ENCODE measurements at regions of chr10 and their contacts with region 1.

Region 1: DNA sequence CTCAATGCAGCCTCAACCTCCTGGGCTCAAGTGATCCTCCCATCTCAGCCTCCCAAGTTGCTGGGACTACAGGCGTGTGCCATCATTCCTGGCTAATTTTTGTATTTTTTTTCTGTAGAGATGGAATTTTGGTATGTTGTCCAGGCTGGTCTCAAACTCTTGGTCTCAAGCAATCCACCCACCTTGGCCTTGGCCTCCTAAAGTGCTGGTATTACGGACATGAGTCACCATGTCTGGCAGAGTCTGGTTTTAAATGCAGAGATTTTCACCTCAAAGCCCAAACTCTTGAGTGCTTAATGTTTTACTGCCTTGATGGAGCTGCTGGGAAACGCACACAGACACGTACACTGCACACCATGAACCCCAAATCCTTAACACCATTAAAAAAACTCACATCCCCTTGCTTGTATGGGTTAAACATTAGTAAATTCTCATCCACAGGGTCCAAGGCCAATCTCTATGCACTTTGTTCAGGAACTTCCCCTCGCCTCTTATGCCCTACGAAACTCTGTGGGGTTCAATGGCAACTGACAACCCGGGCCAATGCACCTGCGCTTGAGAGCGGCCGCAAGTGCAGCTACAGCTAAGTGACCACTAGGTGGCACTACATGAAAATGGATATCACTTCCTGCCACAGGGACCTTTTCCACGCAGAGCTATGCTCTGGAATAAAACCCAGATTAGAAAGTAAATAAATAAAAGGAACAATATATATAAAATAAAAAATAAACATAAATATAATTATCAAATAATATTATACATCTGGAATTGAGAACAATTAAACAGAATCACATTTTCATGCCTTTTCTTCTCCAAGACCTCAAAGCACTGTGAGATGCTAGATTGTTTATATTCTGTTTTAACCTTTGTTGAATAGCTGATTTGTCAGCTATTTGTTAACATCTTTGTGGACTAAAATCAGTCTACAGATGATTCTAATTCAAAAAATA is 66.9 kb upstream of the AFAP1L2 start:
- DNase-seq: peak; percentile 83
- ATAC-seq: peak; percentile 90
- H3K4me3 ChIP-seq: no peak overlapping the region
- H3K4me3 Mint-ChIP-seq: no peak overlapping the region
- H3K27ac ChIP-seq: no peak overlapping the region
- H3K27ac Mint-ChIP-seq: no peak overlapping the region
- H3K4me1 ChIP-seq: peaks cover 0 to 4% of the 10 kb centered on the region in 2 donors
- H3K4me1 Mint-ChIP-seq: peaks cover 25% of the 10 kb centered on the region
- H3K27me3 ChIP-seq: no peaks in the 10 kb centered on the region
- H3K27me3 Mint-ChIP-seq: no peaks in the 10 kb centered on the region
- CTCF ChIP-seq: peak; percentile 96

Region 2: DNA sequence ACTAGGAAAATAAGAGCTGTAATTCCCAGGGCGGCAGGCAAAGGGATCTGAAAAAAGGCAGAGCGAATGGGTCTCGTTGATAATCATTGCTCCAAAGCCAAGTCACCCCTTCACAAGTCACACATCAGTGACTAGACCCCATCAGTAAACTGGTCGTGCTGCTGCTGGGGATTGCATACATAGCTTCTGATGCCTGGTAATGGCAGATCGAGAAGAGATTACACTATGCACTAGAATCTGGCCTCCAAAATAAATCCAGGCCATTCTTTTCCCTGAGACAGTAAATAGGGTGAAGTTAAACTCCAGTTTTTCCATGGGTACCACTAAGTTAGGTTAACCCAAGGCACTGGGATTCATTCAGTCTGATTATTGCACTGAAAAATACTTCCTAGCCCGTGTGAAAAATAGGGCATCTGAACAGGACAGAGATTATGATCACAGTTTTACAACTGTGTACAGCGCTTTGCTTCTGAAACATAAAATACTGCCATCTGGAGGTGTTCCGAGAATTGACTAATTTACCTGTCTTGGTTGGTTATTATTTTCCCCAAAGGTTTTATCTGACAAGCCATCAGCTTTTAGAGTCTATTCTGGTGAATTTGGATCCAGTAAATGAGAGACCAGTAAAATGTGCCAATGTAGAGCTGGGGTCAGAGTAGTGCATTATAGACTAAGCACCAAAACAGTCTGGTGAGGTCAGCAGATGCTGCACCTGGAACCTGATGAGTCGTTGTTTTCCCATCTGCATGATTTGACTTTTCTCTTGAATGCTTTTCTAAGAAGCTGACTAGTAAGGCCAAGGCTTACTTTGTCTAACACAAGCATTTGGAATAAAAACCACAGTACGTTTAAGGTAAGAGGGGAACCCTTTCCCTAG is 15.9 kb after region 1 on chr10:
- CTCF ChIA-PET with region 1: interaction called, 49 read pairs
- POLR2A ChIA-PET with region 1: no interaction called
- intact Hi-C with region 1: no loop called
- DNase-seq: no peak
- ATAC-seq: no peak
- H3K4me3 ChIP-seq: no peak overlapping the region
- H3K4me3 Mint-ChIP-seq: no peak overlapping the region
- H3K27ac ChIP-seq: no peak overlapping the region
- H3K27ac Mint-ChIP-seq: no peak overlapping the region
- H3K4me1 ChIP-seq: peaks cover 7 to 8% of the 10 kb centered on the region in 2 donors
- H3K4me1 Mint-ChIP-seq: peaks cover 15% of the 10 kb centered on the region
- H3K27me3 ChIP-seq: no peaks in the 10 kb centered on the region
- H3K27me3 Mint-ChIP-seq: no peaks in the 10 kb centered on the region
- CTCF ChIP-seq: no peak

Region 3: GRCh38 chr10:114499630-114500190 is 28.5 kb after region 1 on chr10:
- CTCF ChIA-PET with region 1: interaction called, 17 read pairs
- POLR2A ChIA-PET with region 1: interaction called, 3 read pairs
- intact Hi-C with region 1: loop called (anchors 2 kb)
- DNase-seq: peak; percentile 75
- ATAC-seq: peak; percentile 26
- H3K4me3 ChIP-seq: peak overlapping the region in 3 of 5 experiments; percentile 4 to 51 (median 32)
- H3K4me3 Mint-ChIP-seq: peak overlapping the region; percentile 79
- H3K27ac ChIP-seq: peak overlapping the region; percentile 90 to 96
- H3K27ac Mint-ChIP-seq: peak overlapping the region; percentile 94
- H3K4me1 ChIP-seq: peaks cover 69 to 82% of the 10 kb centered on the region in 2 donors
- H3K4me1 Mint-ChIP-seq: peaks cover 84% of the 10 kb centered on the region
- H3K27me3 ChIP-seq: no peaks in the 10 kb centered on the region
- H3K27me3 Mint-ChIP-seq: no peaks in the 10 kb centered on the region
- CTCF ChIP-seq: no peak

Region 4: DNA sequence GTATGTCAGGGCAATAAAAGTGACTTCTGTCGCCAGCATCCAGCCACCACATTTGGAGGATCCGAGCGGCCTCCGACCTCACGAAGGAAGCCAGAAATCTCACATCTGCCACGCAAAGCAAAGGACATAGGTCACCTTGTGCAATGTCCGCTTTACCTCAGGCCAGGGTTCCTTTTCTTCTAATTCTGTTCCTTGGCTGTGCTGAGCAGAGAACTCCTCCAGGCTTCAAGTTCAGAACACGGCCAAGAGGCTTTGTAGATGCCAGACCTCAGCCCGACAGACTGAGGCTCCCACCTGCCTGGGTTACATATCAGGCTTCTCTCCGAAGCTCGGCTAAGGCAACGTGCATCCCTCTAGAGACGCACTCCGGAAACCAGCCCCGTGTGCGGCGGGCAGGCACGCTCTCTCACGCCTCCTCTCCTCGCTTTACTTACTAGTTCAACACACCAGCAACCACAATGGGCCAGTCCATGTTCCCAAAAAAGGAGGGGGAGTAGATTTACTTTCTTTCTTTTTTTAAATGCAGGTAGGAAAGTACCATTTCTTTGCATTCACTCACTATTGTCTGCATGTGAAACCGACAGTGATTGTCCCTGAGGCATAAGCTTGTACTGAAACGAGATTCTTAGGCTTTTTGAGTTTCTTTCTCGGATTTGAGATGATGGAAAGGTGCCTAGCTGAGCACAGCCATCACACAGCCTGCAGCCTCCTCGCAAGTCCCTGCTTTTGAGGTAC is 55.4 kb after region 1 on chr10:
- CTCF ChIA-PET with region 1: interaction called, 43 read pairs
- POLR2A ChIA-PET with region 1: interaction called, 3 read pairs
- intact Hi-C with region 1: loop called (anchors 1 kb)
- DNase-seq: peak; percentile 96
- ATAC-seq: peak; percentile 96
- H3K4me3 ChIP-seq: peak overlapping the region; percentile 64 to 84 (median 79)
- H3K4me3 Mint-ChIP-seq: peak overlapping the region; percentile 95
- H3K27ac ChIP-seq: peak overlapping the region; percentile 79 to 96
- H3K27ac Mint-ChIP-seq: peak overlapping the region; percentile 99
- H3K4me1 ChIP-seq: peaks cover 42 to 51% of the 10 kb centered on the region in 2 donors
- H3K4me1 Mint-ChIP-seq: peaks cover 59% of the 10 kb centered on the region
- H3K27me3 ChIP-seq: no peaks in the 10 kb centered on the region
- H3K27me3 Mint-ChIP-seq: no peaks in the 10 kb centered on the region
- CTCF ChIP-seq: no peak

Region 5: DNA sequence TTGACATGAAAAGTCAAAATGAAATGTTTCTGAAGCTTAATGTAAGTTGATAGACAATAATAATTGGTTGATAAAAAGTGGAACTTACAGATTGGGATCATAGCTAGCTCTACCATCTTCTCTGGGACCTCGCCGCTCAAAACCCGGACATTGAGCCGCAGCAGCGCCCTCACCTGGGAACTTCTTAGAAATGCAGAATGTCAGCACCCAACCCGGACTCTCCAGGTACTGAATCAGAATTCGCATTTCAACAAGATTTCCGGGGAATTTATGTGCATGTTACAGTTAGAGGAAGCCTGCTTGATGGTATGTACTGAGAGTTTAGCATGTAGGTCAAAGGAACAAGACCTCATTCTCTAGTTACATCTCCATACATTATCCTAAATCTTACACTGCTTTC is 223.5 kb after region 1 on chr10:
- CTCF ChIA-PET with region 1: interaction called, 34 read pairs
- POLR2A ChIA-PET with region 1: no interaction called
- intact Hi-C with region 1: loop called (anchors 1 kb)
- DNase-seq: peak; percentile 42
- ATAC-seq: no peak
- H3K4me3 ChIP-seq: no peak overlapping the region
- H3K4me3 Mint-ChIP-seq: no peak overlapping the region
- H3K27ac ChIP-seq: no peak overlapping the region
- H3K27ac Mint-ChIP-seq: no peak overlapping the region
- H3K4me1 ChIP-seq: no peaks in the 10 kb centered on the region
- H3K4me1 Mint-ChIP-seq: no peaks in the 10 kb centered on the region
- H3K27me3 ChIP-seq: peaks cover 0 to 5% (median 4%) of the 10 kb centered on the region in 4 experiments
- H3K27me3 Mint-ChIP-seq: peaks cover 10% of the 10 kb centered on the region
- CTCF ChIP-seq: peak; percentile 60

Region 6: DNA sequence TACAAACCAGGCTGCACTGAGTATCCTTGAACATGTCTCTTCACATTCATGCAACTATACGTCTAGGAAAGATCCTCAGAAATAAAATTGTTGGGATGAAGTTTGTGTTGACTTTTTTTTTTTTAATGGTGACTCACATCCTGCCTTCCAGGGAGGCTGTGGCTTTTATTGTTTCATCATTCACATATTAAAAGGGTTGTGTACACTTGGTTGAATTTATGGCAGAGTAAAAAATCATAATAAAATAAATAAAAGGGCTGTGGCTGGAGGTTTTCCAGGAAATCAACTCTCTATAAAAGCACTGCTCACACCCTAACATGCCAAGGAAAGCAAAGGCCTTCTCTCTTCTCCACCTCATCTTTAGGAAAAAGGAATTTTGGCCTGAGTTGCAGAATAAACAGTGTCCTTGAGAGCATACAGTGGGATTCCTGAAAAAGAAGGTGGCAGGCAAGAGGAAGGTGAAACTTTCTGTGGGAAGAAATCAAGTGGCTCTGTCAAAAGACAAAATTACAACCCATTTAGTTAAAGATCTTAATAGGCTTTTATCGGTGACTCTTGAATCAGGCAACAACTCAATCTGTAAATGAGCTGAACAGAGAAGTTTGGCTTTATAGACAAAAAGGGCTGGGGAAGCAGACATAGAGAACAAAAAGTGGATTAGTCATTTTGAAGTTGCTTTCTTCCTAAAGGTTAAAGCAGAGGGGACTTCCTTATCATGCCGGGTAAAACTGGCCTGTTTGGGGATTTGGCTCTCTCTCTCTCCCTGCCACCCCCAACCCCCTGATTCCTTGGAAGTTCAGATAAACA is 308.8 kb after region 1 on chr10:
- CTCF ChIA-PET with region 1: interaction called, 50 read pairs
- POLR2A ChIA-PET with region 1: no interaction called
- intact Hi-C with region 1: no loop called
- DNase-seq: no peak
- ATAC-seq: no peak
- H3K4me3 ChIP-seq: no peak overlapping the region
- H3K4me3 Mint-ChIP-seq: no peak overlapping the region
- H3K27ac ChIP-seq: no peak overlapping the region
- H3K27ac Mint-ChIP-seq: no peak overlapping the region
- H3K4me1 ChIP-seq: no peaks in the 10 kb centered on the region
- H3K4me1 Mint-ChIP-seq: no peaks in the 10 kb centered on the region
- H3K27me3 ChIP-seq: peaks cover 0 to 4% (median 0%) of the 10 kb centered on the region in 4 experiments
- H3K27me3 Mint-ChIP-seq: peaks cover 5% of the 10 kb centered on the region
- CTCF ChIP-seq: no peak